Activated CD8-positive, alpha-beta memory T cell treated with anti-CD3 and anti-CD28 coated beads, Interleukin-2, amount 10 ng/mL, durations not matched to agents 7 days and 5 days (primary cell): ENCODE measurements at regions of chr14 and their contacts with region 1.

Region 1: DNA sequence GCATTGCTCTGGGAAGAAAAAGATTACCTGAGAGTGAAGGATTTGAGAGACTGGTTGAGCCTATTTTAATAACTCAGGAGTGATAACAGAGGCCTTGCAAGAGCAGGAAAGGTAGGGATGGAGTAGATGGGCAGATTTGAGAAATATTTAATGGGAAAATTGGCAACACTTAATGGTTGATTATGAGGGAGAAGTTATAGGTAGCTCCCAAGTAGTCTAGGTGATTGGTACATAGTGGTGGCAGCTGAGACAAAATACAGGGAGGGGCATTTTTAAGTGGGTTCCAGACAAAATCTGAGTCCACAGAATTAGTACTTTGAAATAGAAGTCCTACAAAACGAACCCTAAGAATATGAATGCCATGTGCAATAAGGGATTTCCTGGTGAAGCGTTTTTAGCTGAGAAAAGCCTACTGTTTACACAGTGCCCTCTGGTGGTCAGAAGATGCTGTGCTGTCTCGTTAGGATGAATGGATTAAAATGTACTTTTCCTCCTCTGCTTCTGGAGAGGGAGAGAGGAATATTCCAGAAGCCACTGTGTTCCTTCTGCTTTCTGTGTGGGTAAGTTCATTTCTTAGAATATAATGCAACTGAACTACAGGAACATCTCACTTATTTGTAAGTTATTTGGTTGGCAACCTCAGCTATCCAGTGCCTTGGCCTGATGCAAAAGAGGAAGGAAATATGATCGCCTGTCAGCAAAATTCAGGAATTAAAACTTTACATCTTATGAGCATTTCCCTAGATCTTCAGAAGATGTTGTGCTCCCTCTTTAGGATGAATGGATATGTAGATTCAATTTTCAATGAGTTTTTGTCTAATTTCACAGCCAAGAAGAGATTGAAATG is 6.5 kb downstream of the ZBTB1 start:
- DNase-seq: peak; percentile 79
- ATAC-seq: peak; percentile 35
- H3K4me3 Mint-ChIP-seq: peak overlapping the region; percentile 91
- H3K27ac Mint-ChIP-seq: peak overlapping the region; percentile 98
- H3K4me1 Mint-ChIP-seq: peaks cover 66% of the 10 kb centered on the region
- H3K27me3 Mint-ChIP-seq: no peaks in the 10 kb centered on the region

Region 2: GRCh38 chr14:64345513-64345912 is 165.5 kb before region 1 on chr14:
- CTCF ChIA-PET with region 1: interaction called, 15 read pairs
- DNase-seq: no peak
- ATAC-seq: no peak
- H3K4me3 Mint-ChIP-seq: no peak overlapping the region
- H3K27ac Mint-ChIP-seq: no peak overlapping the region
- H3K4me1 Mint-ChIP-seq: peaks cover 5% of the 10 kb centered on the region
- H3K27me3 Mint-ChIP-seq: no peaks in the 10 kb centered on the region

Region 3: GRCh38 chr14:64491637-64492036 is 19.4 kb before region 1 on chr14:
- CTCF ChIA-PET with region 1: interaction called, 70 read pairs
- DNase-seq: no peak
- ATAC-seq: no peak
- H3K4me3 Mint-ChIP-seq: no peak overlapping the region
- H3K27ac Mint-ChIP-seq: no peak overlapping the region
- H3K4me1 Mint-ChIP-seq: peaks cover 28% of the 10 kb centered on the region
- H3K27me3 Mint-ChIP-seq: no peaks in the 10 kb centered on the region

Region 4: GRCh38 chr14:64496764-64497163 is 14.3 kb before region 1 on chr14:
- CTCF ChIA-PET with region 1: interaction called, 70 read pairs
- DNase-seq: no peak
- ATAC-seq: no peak
- H3K4me3 Mint-ChIP-seq: no peak overlapping the region
- H3K27ac Mint-ChIP-seq: no peak overlapping the region
- H3K4me1 Mint-ChIP-seq: peaks cover 53% of the 10 kb centered on the region
- H3K27me3 Mint-ChIP-seq: no peaks in the 10 kb centered on the region

Region 5: DNA sequence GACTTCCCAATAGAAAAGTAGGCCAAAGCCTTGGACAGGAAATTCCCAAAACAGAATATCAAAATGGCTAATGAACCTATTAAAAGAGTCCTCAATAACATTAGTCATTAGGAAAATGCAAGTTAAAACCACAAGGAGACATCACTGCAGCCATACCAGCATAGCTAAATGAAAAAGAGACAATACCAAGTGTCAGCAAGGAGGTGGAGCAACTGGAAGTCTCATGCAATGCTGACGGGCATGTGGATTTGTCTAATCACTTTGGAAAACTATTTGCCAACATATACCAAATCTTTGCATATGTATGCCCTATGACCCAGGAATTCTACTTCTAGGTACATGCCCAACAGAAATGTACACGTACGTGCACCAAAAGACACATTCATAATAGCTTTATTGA is 132.7 kb after region 1 on chr14:
- CTCF ChIA-PET with region 1: no interaction called
- DNase-seq: no peak
- ATAC-seq: no peak
- H3K4me3 Mint-ChIP-seq: no peak overlapping the region
- H3K27ac Mint-ChIP-seq: no peak overlapping the region
- H3K4me1 Mint-ChIP-seq: peaks cover 1% of the 10 kb centered on the region
- H3K27me3 Mint-ChIP-seq: peaks cover 24% of the 10 kb centered on the region